Upper lobe of right lung (tissue), 1 donor: ENCODE measurements at regions of chr2 and their contacts with region 1.

Region 1: DNA sequence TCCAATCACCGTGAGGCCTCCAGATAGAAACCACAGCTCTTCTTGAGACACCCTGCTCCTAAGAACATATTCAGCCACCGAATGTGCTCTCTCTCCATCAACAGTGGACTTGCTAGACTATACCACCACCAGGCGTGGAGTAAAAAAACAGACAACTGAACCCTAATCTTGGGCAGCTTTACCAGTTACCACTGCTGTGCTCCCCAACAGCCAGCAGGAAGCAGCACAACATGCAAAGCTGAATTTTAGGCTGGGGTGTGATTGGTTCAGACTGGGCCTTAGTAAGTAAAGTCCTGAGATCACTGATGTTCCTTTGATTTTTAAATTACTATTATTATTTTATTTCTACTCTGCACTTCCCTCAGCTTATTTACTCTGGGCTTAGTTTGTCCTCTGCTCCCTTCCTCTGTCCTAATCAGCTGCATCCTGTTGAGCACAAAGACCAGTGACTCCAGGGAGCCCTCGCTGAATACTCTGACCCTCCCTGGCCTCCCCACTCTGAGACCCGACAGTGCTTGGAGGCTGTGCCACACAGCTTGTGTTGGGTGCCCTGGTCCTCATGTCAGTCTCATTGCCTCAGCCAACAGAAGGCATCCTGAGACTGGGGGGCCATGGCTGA is 21.9 kb downstream of the MRPL35 start:
- DNase-seq: no peak
- ATAC-seq: peak; percentile 66
- H3K4me3 ChIP-seq: no peak overlapping the region
- H3K27ac ChIP-seq: no peak overlapping the region
- H3K4me1 ChIP-seq: peaks cover 29% of the 10 kb centered on the region
- H3K27me3 ChIP-seq: no peaks in the 10 kb centered on the region
- CTCF ChIP-seq: peak; percentile 75

Region 2: GRCh38 chr2:86298411-86299379 is 77.5 kb after region 1 on chr2:
- intact Hi-C with region 1: loop called (anchors 10 kb)
- DNase-seq: peak; percentile 40
- ATAC-seq: peak; percentile 38
- H3K4me3 ChIP-seq: no peak overlapping the region
- H3K27ac ChIP-seq: no peak overlapping the region
- H3K4me1 ChIP-seq: peaks cover 14% of the 10 kb centered on the region
- H3K27me3 ChIP-seq: no peaks in the 10 kb centered on the region
- CTCF ChIP-seq: peak; percentile 28

Region 3: DNA sequence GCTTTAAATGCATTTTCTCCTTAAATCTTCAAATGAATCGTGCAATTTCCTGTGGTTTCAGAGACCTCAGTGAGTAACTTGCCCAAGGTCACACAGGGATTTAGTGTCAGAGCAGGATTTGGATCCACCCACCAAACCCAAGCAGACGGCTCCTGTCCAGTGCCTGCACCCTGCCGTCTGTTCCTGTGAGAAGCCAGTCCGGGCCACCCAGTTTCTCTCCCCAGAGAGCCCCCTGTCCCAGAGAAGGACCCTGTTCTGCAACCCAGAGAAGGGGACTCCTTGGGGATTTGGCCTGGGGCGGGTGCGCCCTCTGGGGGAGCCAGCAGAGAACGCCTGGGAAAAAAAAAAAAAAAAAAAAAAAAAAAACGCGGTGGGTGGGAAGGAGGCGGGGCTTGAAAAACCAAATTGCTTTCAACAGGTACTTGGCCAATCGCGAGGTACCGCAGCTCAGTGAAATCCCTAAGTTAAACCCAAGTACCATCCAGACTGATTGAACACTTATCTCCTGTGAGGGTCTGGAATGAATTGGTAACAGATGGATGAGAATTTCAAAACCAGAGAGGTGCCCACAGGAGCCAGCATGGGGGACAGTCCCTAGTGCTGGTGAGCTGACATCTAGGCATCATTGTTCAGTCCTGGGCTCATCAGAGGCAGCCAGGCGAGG is 147.1 kb after region 1 on chr2:
- intact Hi-C with region 1: loop called (anchors 10 kb)
- DNase-seq: peak; percentile 69
- ATAC-seq: peak; percentile 56
- H3K4me3 ChIP-seq: no peak overlapping the region
- H3K27ac ChIP-seq: no peak overlapping the region
- H3K4me1 ChIP-seq: peaks cover 8% of the 10 kb centered on the region
- H3K27me3 ChIP-seq: no peaks in the 10 kb centered on the region
- CTCF ChIP-seq: peak; percentile 63